CD4-positive, alpha-beta memory T cell (primary cell): ENCODE measurements at regions of chr12 and their contacts with region 1.

Region 1: GRCh38 chr12:10212201-10213131 is at the start of gene GABARAPL1:
- DNase-seq: peak; percentile 84 to 94 (median 88)
- H3K4me3 ChIP-seq: peak within 1 kb of the TSS; percentile 57 to 69
- H3K4me3 Mint-ChIP-seq: peak within 1 kb of the TSS; percentile 88 to 98 (median 94)
- H3K27ac ChIP-seq: peak within 1 kb of the TSS; percentile 81
- H3K27ac Mint-ChIP-seq: peak within 1 kb of the TSS; percentile 92 to 99 (median 96)
- H3K4me1 ChIP-seq: peaks cover 32% of the 10 kb centered on the region
- H3K4me1 Mint-ChIP-seq: peaks cover 19 to 44% (median 25%) of the 10 kb centered on the region in 4 donors
- H3K27me3 ChIP-seq: no peaks in the 10 kb centered on the region
- H3K27me3 Mint-ChIP-seq: no peaks in the 10 kb centered on the region
- total RNA-seq, gene GABARAPL1: 35.3 to 36.3 TPM

Region 2: DNA sequence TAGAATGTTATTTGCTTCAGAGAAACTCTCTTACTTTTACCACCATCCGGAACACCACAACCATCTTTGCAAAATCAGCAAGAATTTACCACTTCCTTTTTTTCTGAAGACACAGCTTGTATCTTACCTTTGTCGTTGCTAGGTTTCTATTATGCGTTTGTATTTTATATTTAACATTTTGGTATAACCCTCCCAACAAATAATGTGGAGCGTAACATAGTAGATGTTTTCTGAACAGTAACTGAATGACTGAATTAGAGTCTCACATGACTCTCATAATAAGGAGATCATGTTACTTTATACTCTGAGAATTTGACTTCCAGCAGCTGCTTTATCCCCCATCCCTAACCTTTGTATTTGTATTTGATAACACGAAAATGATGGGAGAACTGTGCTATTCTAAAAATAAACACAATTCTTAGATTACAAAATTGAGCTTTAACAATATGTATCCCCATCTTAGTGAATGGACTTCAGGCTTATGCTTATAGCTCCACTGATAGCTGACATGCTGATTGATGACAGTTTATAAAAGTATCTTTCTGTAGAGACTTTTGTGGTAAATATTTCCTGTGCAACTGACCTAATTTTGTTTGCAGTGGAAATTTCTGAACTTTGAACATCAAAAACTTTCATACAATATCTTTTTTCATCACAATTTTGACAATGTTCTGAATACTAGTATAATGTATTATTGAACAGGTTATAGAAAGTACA is 596.9 kb before region 1 on chr12:
- CTCF ChIA-PET with region 1: no interaction called
- POLR2A ChIA-PET with region 1: interaction called, 3 read pairs
- intact Hi-C with region 1: loop called (anchors 10 kb)
- DNase-seq: peak; percentile 39 to 85 (median 76)
- H3K4me3 ChIP-seq: peak overlapping the region in 1 of 2 donors; percentile 46
- H3K4me3 Mint-ChIP-seq: peak overlapping the region; percentile 80 to 94 (median 88)
- H3K27ac ChIP-seq: peak overlapping the region; percentile 84
- H3K27ac Mint-ChIP-seq: peak overlapping the region; percentile 95 to 100 (median 98)
- H3K4me1 ChIP-seq: peaks cover 63% of the 10 kb centered on the region
- H3K4me1 Mint-ChIP-seq: peaks cover 61 to 97% (median 75%) of the 10 kb centered on the region in 4 donors
- H3K27me3 ChIP-seq: no peaks in the 10 kb centered on the region
- H3K27me3 Mint-ChIP-seq: no peaks in the 10 kb centered on the region

Region 3: DNA sequence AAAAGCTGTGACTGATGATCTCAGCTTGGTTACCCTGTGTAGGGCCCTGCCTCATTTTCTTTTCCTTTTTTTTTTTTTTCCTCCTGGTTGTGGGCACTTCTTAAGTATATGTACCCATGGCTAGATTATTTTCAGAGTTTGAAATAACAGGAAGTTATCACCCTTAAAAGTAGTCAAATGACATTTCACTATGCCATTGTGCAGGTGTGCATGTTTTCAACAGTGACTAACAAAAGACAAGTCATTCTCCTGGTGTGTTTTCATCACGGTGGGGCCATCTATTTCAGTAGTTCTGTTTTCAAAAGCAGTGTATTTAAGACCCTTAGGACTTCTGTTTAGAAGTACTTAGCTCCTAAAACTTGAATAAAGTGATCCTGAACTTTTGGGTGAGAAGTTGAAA is 15.2 kb after region 1 on chr12:
- CTCF ChIA-PET with region 1: no interaction called
- POLR2A ChIA-PET with region 1: interaction called, 16 read pairs
- intact Hi-C with region 1: no loop called
- DNase-seq: no peak
- H3K4me3 ChIP-seq: no peak overlapping the region
- H3K4me3 Mint-ChIP-seq: no peak overlapping the region
- H3K27ac ChIP-seq: no peak overlapping the region
- H3K27ac Mint-ChIP-seq: peak overlapping the region in 1 of 7 donors; percentile 44
- H3K4me1 ChIP-seq: no peaks in the 10 kb centered on the region
- H3K4me1 Mint-ChIP-seq: peaks cover 0 to 5% (median 4%) of the 10 kb centered on the region in 4 donors
- H3K27me3 ChIP-seq: no peaks in the 10 kb centered on the region
- H3K27me3 Mint-ChIP-seq: no peaks in the 10 kb centered on the region

Region 4: DNA sequence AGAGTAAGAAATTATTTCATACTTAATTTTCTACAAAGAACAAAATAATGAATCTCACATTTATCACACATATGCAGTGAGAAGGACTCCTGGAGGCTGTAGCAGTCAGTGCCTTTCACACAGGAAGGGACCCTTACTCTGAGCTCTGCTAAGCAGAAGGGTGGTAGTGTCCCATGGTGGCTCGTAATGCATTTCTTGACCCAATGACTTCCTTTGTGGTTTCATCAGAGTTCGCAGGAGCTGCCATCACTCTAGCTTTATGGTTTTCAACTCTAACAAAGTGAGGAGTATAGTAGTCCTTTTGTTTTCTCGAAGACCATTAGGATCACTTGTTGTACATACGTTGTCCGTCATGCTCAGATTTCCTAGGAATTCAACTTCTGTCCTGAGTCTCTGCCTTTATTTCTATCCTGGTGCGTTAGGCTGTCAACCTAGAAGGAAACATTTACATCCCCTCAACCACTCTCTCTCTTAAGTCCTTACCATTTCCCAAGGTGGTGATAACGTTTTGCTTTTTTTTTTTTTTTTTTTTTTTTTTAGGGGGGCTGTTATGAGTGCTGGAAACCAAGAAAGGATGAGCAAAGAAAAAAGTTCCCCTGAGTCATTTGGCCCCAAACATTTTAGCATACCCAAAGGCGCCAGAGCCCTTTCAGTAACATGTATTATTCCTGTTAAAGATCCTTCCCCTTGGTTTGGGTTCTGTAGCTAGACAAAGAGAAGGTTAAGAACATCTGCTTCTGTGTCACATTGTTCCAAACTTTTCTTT is 37.4 kb after region 1 on chr12:
- CTCF ChIA-PET with region 1: no interaction called
- POLR2A ChIA-PET with region 1: no interaction called
- intact Hi-C with region 1: no loop called
- DNase-seq: no peak
- H3K4me3 ChIP-seq: no peak overlapping the region
- H3K4me3 Mint-ChIP-seq: no peak overlapping the region
- H3K27ac ChIP-seq: no peak overlapping the region
- H3K27ac Mint-ChIP-seq: no peak overlapping the region
- H3K4me1 ChIP-seq: no peaks in the 10 kb centered on the region
- H3K4me1 Mint-ChIP-seq: peaks cover 0 to 2% (median 0%) of the 10 kb centered on the region in 4 donors
- H3K27me3 ChIP-seq: no peaks in the 10 kb centered on the region
- H3K27me3 Mint-ChIP-seq: peaks cover 2 to 4% of the 10 kb centered on the region in 2 donors

Region 5: DNA sequence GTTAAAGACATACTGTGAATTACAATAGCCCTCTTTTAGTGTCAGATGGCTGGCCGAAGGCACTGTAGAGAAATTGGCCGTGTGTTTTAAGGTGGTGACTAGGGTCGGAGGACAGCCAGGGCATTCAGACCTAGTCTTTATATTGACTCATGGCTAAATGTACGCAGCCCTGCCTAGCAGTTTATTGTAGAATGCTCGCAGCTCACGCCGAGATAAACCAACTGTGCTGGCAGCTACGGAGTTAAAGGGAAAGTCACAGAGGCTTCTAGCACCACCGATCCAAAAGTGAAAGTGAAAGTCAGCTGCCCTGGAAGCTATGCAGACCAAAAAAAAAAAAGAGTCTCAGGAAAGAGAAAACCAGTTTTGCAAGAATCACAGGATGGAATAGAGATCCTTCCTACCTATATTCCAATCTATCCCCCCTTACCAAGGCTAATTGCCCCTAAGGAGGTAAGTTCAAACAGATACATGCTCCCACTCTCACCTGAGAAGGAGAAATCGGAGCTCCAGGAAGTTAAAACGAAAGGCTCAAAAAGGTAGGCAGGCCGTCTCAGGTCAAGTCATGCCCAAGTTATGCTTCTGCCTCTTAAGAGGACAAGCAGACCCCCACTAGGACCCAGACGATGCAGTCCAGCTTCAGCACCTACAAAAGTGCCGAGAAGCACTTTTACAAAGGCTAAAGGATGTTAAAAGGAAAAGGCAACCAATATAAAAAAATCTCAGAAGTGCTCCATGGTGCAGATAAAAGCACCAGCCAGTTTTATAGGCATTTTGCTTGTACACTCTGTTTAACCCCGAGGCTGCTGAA is 152.6 kb after region 1 on chr12:
- CTCF ChIA-PET with region 1: interaction called, 4 read pairs
- POLR2A ChIA-PET with region 1: interaction called, 16 read pairs
- intact Hi-C with region 1: loop called (anchors 2 kb)
- DNase-seq: peak; percentile 71 to 81 (median 76)
- H3K4me3 ChIP-seq: peak overlapping the region; percentile 77 to 95
- H3K4me3 Mint-ChIP-seq: no peak overlapping the region
- H3K27ac ChIP-seq: peak overlapping the region; percentile 49
- H3K27ac Mint-ChIP-seq: no peak overlapping the region
- H3K4me1 ChIP-seq: peaks cover 16% of the 10 kb centered on the region
- H3K4me1 Mint-ChIP-seq: peaks cover 1 to 7% (median 5%) of the 10 kb centered on the region in 4 donors
- H3K27me3 ChIP-seq: no peaks in the 10 kb centered on the region
- H3K27me3 Mint-ChIP-seq: peaks cover 2 to 4% of the 10 kb centered on the region in 2 donors

Region 6: DNA sequence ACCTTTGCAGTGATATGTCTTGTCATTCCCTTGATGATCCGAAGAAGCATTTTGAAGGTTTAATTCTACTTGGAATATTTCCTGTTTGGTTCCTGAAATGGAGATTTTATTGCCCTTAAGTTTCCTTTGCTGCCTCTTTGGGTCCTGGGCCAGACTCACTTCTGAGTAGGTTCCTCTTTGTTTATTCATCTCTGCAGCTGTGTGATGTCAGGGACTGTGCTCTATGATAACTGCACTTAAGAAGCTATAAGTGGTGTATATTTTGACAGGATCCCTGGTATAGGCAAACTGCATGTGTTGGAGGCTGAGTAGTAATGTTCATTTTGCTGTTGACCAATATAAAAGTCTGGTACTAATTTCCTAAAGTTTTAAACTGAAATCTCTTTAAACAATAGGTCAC is 196.9 kb after region 1 on chr12 and contains the start of gene KLRC4:
- CTCF ChIA-PET with region 1: no interaction called
- POLR2A ChIA-PET with region 1: no interaction called
- intact Hi-C with region 1: no loop called
- DNase-seq: no peak
- H3K4me3 ChIP-seq: no peak within 1 kb of the TSS
- H3K4me3 Mint-ChIP-seq: no peak within 1 kb of the TSS
- H3K27ac ChIP-seq: no peak within 1 kb of the TSS
- H3K27ac Mint-ChIP-seq: no peak within 1 kb of the TSS
- H3K4me1 ChIP-seq: no peaks in the 10 kb centered on the region
- H3K4me1 Mint-ChIP-seq: no peaks in the 10 kb centered on the region
- H3K27me3 ChIP-seq: no peaks in the 10 kb centered on the region
- H3K27me3 Mint-ChIP-seq: peaks cover 0 to 14% of the 10 kb centered on the region in 2 donors
- total RNA-seq, gene KLRC4: not detected

Region 7: DNA sequence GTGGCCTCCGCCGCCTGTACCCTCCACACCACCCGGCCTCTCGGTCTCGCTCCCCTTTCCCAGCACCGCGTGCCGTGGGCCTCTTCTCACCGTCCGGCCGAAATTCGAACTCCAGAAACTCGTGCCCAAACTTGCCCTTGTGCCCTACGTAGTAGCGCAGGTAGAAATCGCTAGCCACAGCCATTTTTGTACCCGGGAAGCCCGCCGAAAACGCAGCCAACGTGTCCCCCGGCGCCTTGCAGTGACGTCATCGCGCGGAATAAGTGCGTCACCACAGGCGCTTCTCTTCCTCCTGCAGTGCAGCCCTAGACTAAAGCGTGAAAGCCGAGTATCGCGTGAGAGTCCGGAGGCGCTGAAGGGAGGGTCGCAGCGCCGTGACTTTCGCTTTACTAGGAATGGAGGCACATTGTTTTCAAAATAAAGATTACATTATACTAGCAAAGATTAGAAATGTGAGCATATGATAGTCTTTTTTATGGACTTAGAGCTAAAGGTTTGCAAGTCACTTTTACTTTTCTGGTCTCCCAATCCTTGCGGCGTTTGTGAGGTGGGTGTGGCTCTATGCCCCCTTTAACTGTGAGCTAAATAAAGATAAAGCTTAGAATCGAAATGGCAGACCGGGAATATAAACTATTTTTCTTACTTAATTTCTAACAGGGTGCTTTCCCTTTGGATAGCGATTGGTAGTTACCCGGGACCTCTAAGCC is 401.0 kb after region 1 on chr12 and contains the start of gene MAGOHB:
- CTCF ChIA-PET with region 1: no interaction called
- POLR2A ChIA-PET with region 1: interaction called, 18 read pairs
- intact Hi-C with region 1: loop called (anchors 1 kb)
- DNase-seq: peak; percentile 96 to 98 (median 96)
- H3K4me3 ChIP-seq: peak within 1 kb of the TSS; percentile 92 to 96
- H3K4me3 Mint-ChIP-seq: peak within 1 kb of the TSS; percentile 99 to 100 (median 100)
- H3K27ac ChIP-seq: peak within 1 kb of the TSS; percentile 93
- H3K27ac Mint-ChIP-seq: peak within 1 kb of the TSS; percentile 99 to 100 (median 100)
- H3K4me1 ChIP-seq: peaks cover 22% of the 10 kb centered on the region
- H3K4me1 Mint-ChIP-seq: peaks cover 20 to 36% (median 27%) of the 10 kb centered on the region in 4 donors
- H3K27me3 ChIP-seq: no peaks in the 10 kb centered on the region
- H3K27me3 Mint-ChIP-seq: peaks cover 5 to 10% of the 10 kb centered on the region in 2 donors
- total RNA-seq, gene MAGOHB: 19.3 to 22.0 TPM

Region 8: GRCh38 chr12:11177169-11177568 is 964.7 kb after region 1 on chr12:
- CTCF ChIA-PET with region 1: no interaction called
- POLR2A ChIA-PET with region 1: no interaction called
- intact Hi-C with region 1: no loop called
- DNase-seq: no peak
- H3K4me3 ChIP-seq: no peak overlapping the region
- H3K4me3 Mint-ChIP-seq: no peak overlapping the region
- H3K27ac ChIP-seq: no peak overlapping the region
- H3K27ac Mint-ChIP-seq: no peak overlapping the region
- H3K4me1 ChIP-seq: peaks cover 14% of the 10 kb centered on the region
- H3K4me1 Mint-ChIP-seq: peaks cover 13 to 28% (median 16%) of the 10 kb centered on the region in 4 donors
- H3K27me3 ChIP-seq: no peaks in the 10 kb centered on the region
- H3K27me3 Mint-ChIP-seq: no peaks in the 10 kb centered on the region